H1 (cell line): ENCODE measurements at regions of chr15 and their contacts with region 1.

Region 1: GRCh38 chr15:38699633-38700230 is 135.1 kb upstream of the RASGRP1 start:
- DNase-seq: peak in 1 of 2 experiments; percentile 63
- H3K4me3 ChIP-seq: no peak overlapping the region
- H3K27ac ChIP-seq: no peak overlapping the region
- H3K4me1 ChIP-seq: peaks cover 0 to 6% (median 3%) of the 10 kb centered on the region in 4 experiments; a peak in 4 of 7 replicates
- H3K27me3 ChIP-seq: no peaks in the 10 kb centered on the region; a peak in 1 of 7 replicates
- CTCF ChIP-seq: peak; percentile 62 to 93 (median 71)
- EP300 ChIP-seq: no peak
- POLR2A ChIP-seq: no peak
- RAD21 ChIP-seq: peak; percentile 66 to 71

Region 2: GRCh38 chr15:38474155-38474757 is 225.5 kb before region 1 on chr15:
- CTCF ChIA-PET with region 1: interaction called, 10 read pairs
- POLR2A ChIA-PET with region 1: no interaction called
- DNase-seq: no peak
- H3K4me3 ChIP-seq: no peak overlapping the region
- H3K27ac ChIP-seq: no peak overlapping the region
- H3K4me1 ChIP-seq: no peaks in the 10 kb centered on the region
- H3K27me3 ChIP-seq: no peaks in the 10 kb centered on the region
- CTCF ChIP-seq: peak in 2 of 3 experiments; percentile 58 to 71; a peak in 3 of 4 replicates
- EP300 ChIP-seq: no peak
- POLR2A ChIP-seq: no peak
- RAD21 ChIP-seq: peak; percentile 82 to 86

Region 3: GRCh38 chr15:38714309-38715072 is 14.8 kb after region 1 on chr15:
- CTCF ChIA-PET with region 1: interaction called, 13 read pairs
- POLR2A ChIA-PET with region 1: no interaction called
- DNase-seq: no peak
- H3K4me3 ChIP-seq: no peak overlapping the region
- H3K27ac ChIP-seq: no peak overlapping the region
- H3K4me1 ChIP-seq: no peaks in the 10 kb centered on the region
- H3K27me3 ChIP-seq: no peaks in the 10 kb centered on the region
- CTCF ChIP-seq: no peak
- EP300 ChIP-seq: no peak
- POLR2A ChIP-seq: no peak
- RAD21 ChIP-seq: no peak

Region 4: DNA sequence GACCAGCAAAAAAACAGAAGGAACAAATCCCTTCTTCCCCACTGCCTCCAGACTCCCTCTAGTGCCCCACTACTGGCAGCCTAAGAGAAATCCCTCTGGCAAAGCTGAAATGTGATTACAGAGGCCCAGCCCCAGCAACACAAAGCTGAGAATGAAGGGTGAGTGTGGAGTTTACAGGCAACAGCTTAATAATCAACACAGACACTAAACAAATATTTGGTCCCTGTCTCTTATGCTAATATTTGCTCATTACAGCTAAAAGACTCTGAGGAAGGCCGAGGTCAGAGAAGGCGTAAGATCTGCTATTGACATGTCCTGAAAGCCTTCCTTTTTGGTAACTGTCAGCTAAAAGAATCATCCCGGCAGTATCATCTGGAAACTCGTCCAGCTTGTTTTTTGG is 173.4 kb after region 1 on chr15:
- CTCF ChIA-PET with region 1: no interaction called
- POLR2A ChIA-PET with region 1: no interaction called
- DNase-seq: no peak
- H3K4me3 ChIP-seq: no peak overlapping the region
- H3K27ac ChIP-seq: no peak overlapping the region
- H3K4me1 ChIP-seq: no peaks in the 10 kb centered on the region
- H3K27me3 ChIP-seq: no peaks in the 10 kb centered on the region
- CTCF ChIP-seq: no peak; a peak in 1 of 4 replicates
- EP300 ChIP-seq: no peak
- POLR2A ChIP-seq: no peak
- RAD21 ChIP-seq: peak in 1 of 2 experiments; percentile 11; a peak in 1 of 4 replicates